B cell (primary cell): ENCODE measurements at regions of chr12 and their contacts with region 1.

Region 1: GRCh38 chr12:91825999-91826398 is 319.6 kb downstream of the BTG1 start:
- DNase-seq: no peak
- ATAC-seq: no peak
- H3K4me3 ChIP-seq: no peak overlapping the region
- H3K4me3 Mint-ChIP-seq: no peak overlapping the region
- H3K27ac ChIP-seq: no peak overlapping the region
- H3K27ac Mint-ChIP-seq: no peak overlapping the region
- H3K4me1 ChIP-seq: no peaks in the 10 kb centered on the region
- H3K4me1 Mint-ChIP-seq: no peaks in the 10 kb centered on the region
- H3K27me3 ChIP-seq: no peaks in the 10 kb centered on the region
- H3K27me3 Mint-ChIP-seq: peaks cover 3% of the 10 kb centered on the region
- CTCF ChIP-seq: no peak

Region 2: DNA sequence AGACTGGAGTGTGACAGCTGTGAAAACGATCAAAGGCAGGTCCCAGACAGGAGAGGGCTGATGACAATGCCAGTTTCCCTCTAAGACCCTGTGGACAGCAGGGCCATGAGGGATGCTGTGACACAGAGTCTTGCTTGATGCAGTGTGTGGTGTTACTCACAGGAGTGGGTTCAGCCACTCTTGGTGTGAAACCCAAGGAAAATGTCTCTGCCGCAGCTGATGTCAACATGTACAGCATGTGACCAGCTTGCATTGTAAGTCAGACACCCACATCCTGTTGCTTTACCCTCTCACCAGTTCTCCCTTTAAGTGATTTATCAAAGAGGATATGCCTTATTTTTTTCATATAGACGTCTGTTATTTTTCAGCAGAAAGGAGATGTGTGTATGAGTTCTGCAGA is 51.0 kb after region 1 on chr12:
- CTCF ChIA-PET with region 1: no interaction called
- POLR2A ChIA-PET with region 1: no interaction called
- intact Hi-C with region 1: no loop called
- DNase-seq: peak; percentile 84
- ATAC-seq: peak; percentile 90
- H3K4me3 ChIP-seq: peak overlapping the region in 1 of 5 experiments; percentile 10
- H3K4me3 Mint-ChIP-seq: peak overlapping the region; percentile 74
- H3K27ac ChIP-seq: peak overlapping the region; percentile 48 to 76
- H3K27ac Mint-ChIP-seq: peak overlapping the region; percentile 93
- H3K4me1 ChIP-seq: peaks cover 19 to 22% of the 10 kb centered on the region in 2 donors
- H3K4me1 Mint-ChIP-seq: peaks cover 27% of the 10 kb centered on the region
- H3K27me3 ChIP-seq: no peaks in the 10 kb centered on the region
- H3K27me3 Mint-ChIP-seq: no peaks in the 10 kb centered on the region
- CTCF ChIP-seq: no peak

Region 3: GRCh38 chr12:91947459-91947858 is 121.5 kb after region 1 on chr12:
- CTCF ChIA-PET with region 1: no interaction called
- POLR2A ChIA-PET with region 1: no interaction called
- intact Hi-C with region 1: loop called (anchors 10 kb)
- DNase-seq: peak; percentile 76
- ATAC-seq: peak; percentile 61
- H3K4me3 ChIP-seq: no peak overlapping the region
- H3K4me3 Mint-ChIP-seq: no peak overlapping the region
- H3K27ac ChIP-seq: no peak overlapping the region
- H3K27ac Mint-ChIP-seq: no peak overlapping the region
- H3K4me1 ChIP-seq: peaks cover 5 to 14% of the 10 kb centered on the region in 2 donors
- H3K4me1 Mint-ChIP-seq: peaks cover 14% of the 10 kb centered on the region
- H3K27me3 ChIP-seq: no peaks in the 10 kb centered on the region
- H3K27me3 Mint-ChIP-seq: peaks cover 3% of the 10 kb centered on the region
- CTCF ChIP-seq: no peak